Spleen (tissue), 13 donors: ENCODE measurements at regions of chr9 and their contacts with region 1.

Region 1: DNA sequence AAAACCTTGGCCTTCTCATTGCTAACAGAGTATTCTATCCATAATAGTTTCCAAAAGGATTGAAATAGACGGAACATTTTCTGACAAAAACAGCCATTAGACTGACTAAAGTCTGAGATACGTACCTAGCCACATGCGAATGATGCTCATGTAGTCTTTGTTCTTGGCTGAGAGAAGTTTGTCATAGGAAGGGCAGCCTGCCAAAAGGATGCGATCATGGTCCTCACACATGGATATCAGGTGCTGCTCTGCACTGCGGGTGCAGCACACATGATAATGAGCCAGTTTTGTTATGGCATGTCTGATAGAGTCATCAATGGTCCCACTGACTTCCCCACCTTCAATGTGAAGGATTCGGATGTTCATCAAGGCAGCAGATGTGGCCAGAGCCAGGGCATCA is 12.3 kb downstream of the GNE start:
- DNase-seq: no peak
- H3K4me3 ChIP-seq: no peak overlapping the region
- H3K27ac ChIP-seq: no peak overlapping the region
- H3K4me1 ChIP-seq: peaks cover 5 to 31% (median 13%) of the 10 kb centered on the region in 6 donors
- H3K27me3 ChIP-seq: no peaks in the 10 kb centered on the region
- CTCF ChIP-seq: no peak
- POLR2A ChIP-seq: no peak

Region 2: GRCh38 chr9:36192196-36192595 is 53.7 kb before region 1 on chr9:
- intact Hi-C with region 1: no loop called
- DNase-seq: no peak
- H3K4me3 ChIP-seq: peak overlapping the region; percentile 77 to 99 (median 95)
- H3K27ac ChIP-seq: peak overlapping the region in 2 of 8 donors; percentile 43 to 97
- H3K4me1 ChIP-seq: peaks cover 22 to 77% (median 48%) of the 10 kb centered on the region in 6 donors
- H3K27me3 ChIP-seq: no peaks in the 10 kb centered on the region
- CTCF ChIP-seq: no peak
- POLR2A ChIP-seq: no peak

Region 3: GRCh38 chr9:36337865-36338264 is 92.0 kb after region 1 on chr9:
- intact Hi-C with region 1: loop called (anchors 10 kb)
- DNase-seq: no peak
- H3K4me3 ChIP-seq: no peak overlapping the region
- H3K27ac ChIP-seq: no peak overlapping the region
- H3K4me1 ChIP-seq: peaks cover 0 to 7% (median 0%) of the 10 kb centered on the region in 6 donors
- H3K27me3 ChIP-seq: no peaks in the 10 kb centered on the region
- CTCF ChIP-seq: no peak
- POLR2A ChIP-seq: no peak

Region 4: GRCh38 chr9:36818965-36819870 is 573.3 kb after region 1 on chr9:
- intact Hi-C with region 1: no loop called
- DNase-seq: peak; percentile 65
- H3K4me3 ChIP-seq: peak overlapping the region in 1 of 8 donors; percentile 42
- H3K27ac ChIP-seq: peak overlapping the region in 5 of 8 donors; percentile 1 to 51 (median 18)
- H3K4me1 ChIP-seq: peaks cover 0 to 19% (median 0%) of the 10 kb centered on the region in 6 donors
- H3K27me3 ChIP-seq: peaks cover 0 to 43% (median 4%) of the 10 kb centered on the region in 7 donors
- CTCF ChIP-seq: no peak
- POLR2A ChIP-seq: no peak